ENCODE measurements at regions of chr14 and their contacts with region 1.

Region 1: DNA sequence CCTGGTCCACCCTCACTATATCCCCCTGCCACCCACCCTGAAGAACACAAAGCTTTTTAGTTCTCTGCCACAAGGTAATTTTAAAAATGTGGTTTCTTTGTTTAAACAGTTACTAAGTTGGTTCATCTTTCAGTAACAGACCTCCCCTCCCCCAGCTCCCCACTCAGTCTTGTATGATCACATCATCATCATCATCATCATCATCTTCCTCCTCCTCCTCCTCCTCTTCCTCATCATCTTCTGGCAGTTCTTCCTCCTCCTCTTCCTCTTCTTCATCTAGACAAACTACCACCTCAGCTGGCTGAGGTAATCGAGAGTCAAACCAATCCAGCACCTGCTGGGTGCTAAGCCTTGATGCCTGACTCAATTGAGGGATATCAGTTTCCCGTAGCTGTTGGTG is 10.5 kb downstream of the HOMEZ start:
- DNase-seq: no peak
- H3K4me3 ChIP-seq: no peak overlapping the region
- H3K27ac ChIP-seq: no peak overlapping the region
- H3K4me1 ChIP-seq: no peaks in the 10 kb centered on the region
- H3K27me3 ChIP-seq: no peaks in the 10 kb centered on the region
- CTCF ChIP-seq: no peak

Region 2: DNA sequence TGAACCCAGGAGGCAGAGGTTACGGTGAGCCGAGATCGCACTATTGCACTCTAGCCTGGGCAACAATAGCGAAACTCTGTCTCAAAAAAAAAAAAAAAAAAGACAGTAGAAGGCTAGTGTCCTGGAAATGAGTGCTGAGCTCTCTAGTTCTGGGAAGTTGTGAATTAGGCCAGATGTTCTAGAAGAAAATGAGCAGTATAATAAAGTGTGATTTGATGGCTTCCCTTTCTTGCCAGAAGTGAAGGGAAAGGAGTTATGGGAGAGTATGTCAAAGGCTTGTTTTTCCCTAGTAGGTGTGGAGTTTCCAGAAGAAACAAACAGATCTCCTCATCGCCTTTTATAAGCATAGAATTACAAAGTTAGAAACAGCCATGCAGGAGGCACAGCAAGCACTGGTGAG is 17.2 kb before region 1 on chr14:
- CTCF ChIA-PET with region 1: no interaction called
- POLR2A ChIA-PET with region 1: interaction called, 11 read pairs
- intact Hi-C with region 1: no loop called
- DNase-seq: no peak
- H3K4me3 ChIP-seq: no peak overlapping the region
- H3K27ac ChIP-seq: no peak overlapping the region
- H3K4me1 ChIP-seq: peaks cover 6% of the 10 kb centered on the region
- H3K27me3 ChIP-seq: no peaks in the 10 kb centered on the region
- CTCF ChIP-seq: no peak

Measured in PC-9 (cell line).